Endothelial cell of umbilical vein (primary cell): ENCODE measurements at regions of chr11 and their contacts with region 1.

Region 1: DNA sequence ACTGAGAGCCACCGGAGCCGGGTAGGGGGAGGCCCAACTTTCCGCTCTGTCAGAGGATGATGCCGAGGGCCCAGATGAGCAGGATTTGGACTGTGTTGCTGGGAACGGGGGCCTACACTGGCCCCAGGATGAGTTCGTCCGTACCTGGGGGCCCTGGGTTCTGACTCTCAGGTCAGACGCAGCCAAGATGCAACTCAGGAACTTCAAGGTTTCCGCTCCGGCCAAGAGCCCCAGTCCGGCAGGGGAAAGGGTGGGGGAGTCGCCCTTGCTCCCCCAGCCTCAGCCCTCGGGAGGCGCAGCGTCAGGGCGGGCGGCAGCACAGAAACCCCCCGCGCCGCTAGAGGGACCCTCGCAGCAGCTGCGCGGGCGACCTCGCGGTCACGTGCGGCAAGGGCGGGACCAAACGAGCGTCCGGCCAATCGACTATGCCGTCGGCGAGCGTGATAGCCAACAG is 241 bp upstream of the ARL2 start:
- DNase-seq: peak; percentile 92
- H3K4me3 ChIP-seq: peak overlapping the region; percentile 32 to 84 (median 59)
- H3K27ac ChIP-seq: peak overlapping the region; percentile 87
- H3K4me1 ChIP-seq: peaks cover 4% of the 10 kb centered on the region
- H3K27me3 ChIP-seq: no peaks in the 10 kb centered on the region
- CTCF ChIP-seq: peak in 1 of 2 donors; percentile 56
- POLR2A ChIP-seq: no peak

Region 2: GRCh38 chr11:64729851-64730382 is 283.8 kb before region 1 on chr11:
- CTCF ChIA-PET with region 1: no interaction called
- POLR2A ChIA-PET with region 1: no interaction called
- dilution Hi-C with region 1: no loop called
- intact Hi-C with region 1: no loop called
- DNase-seq: no peak
- H3K4me3 ChIP-seq: no peak overlapping the region
- H3K27ac ChIP-seq: no peak overlapping the region
- H3K4me1 ChIP-seq: no peaks in the 10 kb centered on the region
- H3K27me3 ChIP-seq: peaks cover 3 to 9% of the 10 kb centered on the region in 2 experiments
- CTCF ChIP-seq: no peak
- POLR2A ChIP-seq: no peak

Region 3: GRCh38 chr11:64846998-64847666 is 166.6 kb before region 1 on chr11:
- CTCF ChIA-PET with region 1: interaction called, 14 read pairs
- POLR2A ChIA-PET with region 1: no interaction called
- dilution Hi-C with region 1: no loop called
- intact Hi-C with region 1: loop called (anchors 1 kb)
- DNase-seq: peak; percentile 85
- H3K4me3 ChIP-seq: no peak overlapping the region
- H3K27ac ChIP-seq: no peak overlapping the region
- H3K4me1 ChIP-seq: no peaks in the 10 kb centered on the region
- H3K27me3 ChIP-seq: no peaks in the 10 kb centered on the region
- CTCF ChIP-seq: peak; percentile 87 to 96
- POLR2A ChIP-seq: no peak

Region 4: DNA sequence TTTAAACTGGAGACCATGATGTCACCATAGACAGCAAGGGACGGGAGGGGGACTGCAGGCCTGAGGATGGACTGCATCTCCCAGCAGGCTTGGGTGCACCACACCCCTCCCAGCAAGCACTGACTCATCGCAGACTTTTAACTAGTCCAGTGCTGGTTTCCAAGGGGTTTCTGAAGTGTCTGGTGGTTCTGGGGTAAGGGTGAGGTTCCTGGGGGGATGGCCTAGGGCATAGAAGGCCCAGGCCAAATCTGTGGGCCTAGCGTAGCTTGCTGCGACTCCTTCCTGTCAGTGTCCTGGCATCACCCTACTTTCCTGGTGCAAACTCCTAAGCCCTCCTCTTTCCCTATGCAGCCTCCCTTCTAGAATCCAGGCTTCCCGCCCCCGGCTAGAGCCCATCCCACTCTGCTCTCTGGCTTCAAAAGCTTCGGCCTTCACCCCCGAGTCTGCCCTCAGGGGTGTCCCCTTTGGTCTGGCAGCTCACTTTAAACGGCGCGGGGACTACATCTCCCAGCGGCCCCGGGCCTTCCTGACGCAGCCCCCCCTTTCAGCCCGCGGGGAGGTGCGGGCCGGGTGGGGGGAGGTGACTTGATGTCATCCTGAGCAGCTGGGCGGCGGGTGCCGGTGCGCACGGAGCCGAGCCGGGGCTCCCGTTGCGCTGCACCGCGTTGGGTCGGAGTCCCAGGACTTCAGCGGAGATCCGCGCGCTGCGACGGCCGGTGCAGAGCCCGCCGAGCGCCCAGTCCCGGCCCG is 89.4 kb before region 1 on chr11 and contains the start of gene PPP2R5B:
- CTCF ChIA-PET with region 1: interaction called, 10 read pairs
- POLR2A ChIA-PET with region 1: no interaction called
- dilution Hi-C with region 1: no loop called
- intact Hi-C with region 1: no loop called
- DNase-seq: peak; percentile 91
- H3K4me3 ChIP-seq: peak within 1 kb of the TSS; percentile 40 to 88 (median 81)
- H3K27ac ChIP-seq: peak within 1 kb of the TSS; percentile 69
- H3K4me1 ChIP-seq: peaks cover 7% of the 10 kb centered on the region
- H3K27me3 ChIP-seq: no peaks in the 10 kb centered on the region
- CTCF ChIP-seq: no peak
- POLR2A ChIP-seq: peak; percentile 26
- total RNA-seq, gene PPP2R5B: 17.8 and 21.5 TPM in 2 replicates

Region 5: GRCh38 chr11:65027213-65028067 is 13.7 kb after region 1 on chr11 and contains the start of gene SNX15:
- CTCF ChIA-PET with region 1: interaction called, 10 read pairs
- POLR2A ChIA-PET with region 1: no interaction called
- dilution Hi-C with region 1: no loop called
- intact Hi-C with region 1: loop called (anchors 1 kb)
- DNase-seq: peak; percentile 95
- H3K4me3 ChIP-seq: peak within 1 kb of the TSS; percentile 68 to 83 (median 74)
- H3K27ac ChIP-seq: peak within 1 kb of the TSS; percentile 61
- H3K4me1 ChIP-seq: peaks cover 11% of the 10 kb centered on the region
- H3K27me3 ChIP-seq: no peaks in the 10 kb centered on the region
- CTCF ChIP-seq: peak; percentile 38 to 84
- POLR2A ChIP-seq: peak; percentile 81
- total RNA-seq, gene SNX15: 21.0 and 21.8 TPM in 2 replicates

Region 6: DNA sequence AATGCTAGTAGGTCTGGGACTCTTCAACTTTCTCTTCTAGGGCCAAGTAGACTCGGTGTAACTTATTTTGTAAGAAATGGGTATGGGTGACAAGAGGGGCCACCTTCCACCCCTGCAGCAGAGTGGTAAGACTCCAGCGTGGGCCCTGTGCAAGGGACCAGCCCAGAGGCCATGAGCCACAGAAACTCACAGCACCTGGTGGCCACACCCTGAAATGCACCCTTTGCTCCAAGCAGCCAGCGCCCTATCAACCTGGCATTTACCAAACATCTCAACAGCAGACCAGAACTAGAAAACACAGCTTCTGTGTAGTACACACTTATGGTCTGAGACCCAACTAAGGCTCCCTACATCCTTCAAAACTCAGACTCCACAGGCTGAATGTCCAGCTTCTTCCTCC is 64.4 kb after region 1 on chr11:
- CTCF ChIA-PET with region 1: interaction called, 11 read pairs
- POLR2A ChIA-PET with region 1: no interaction called
- dilution Hi-C with region 1: no loop called
- intact Hi-C with region 1: loop called (anchors 1 kb)
- DNase-seq: peak; percentile 22
- H3K4me3 ChIP-seq: no peak overlapping the region
- H3K27ac ChIP-seq: no peak overlapping the region
- H3K4me1 ChIP-seq: peaks cover 6% of the 10 kb centered on the region
- H3K27me3 ChIP-seq: no peaks in the 10 kb centered on the region
- CTCF ChIP-seq: peak; percentile 51 to 67
- POLR2A ChIP-seq: no peak

Region 7: DNA sequence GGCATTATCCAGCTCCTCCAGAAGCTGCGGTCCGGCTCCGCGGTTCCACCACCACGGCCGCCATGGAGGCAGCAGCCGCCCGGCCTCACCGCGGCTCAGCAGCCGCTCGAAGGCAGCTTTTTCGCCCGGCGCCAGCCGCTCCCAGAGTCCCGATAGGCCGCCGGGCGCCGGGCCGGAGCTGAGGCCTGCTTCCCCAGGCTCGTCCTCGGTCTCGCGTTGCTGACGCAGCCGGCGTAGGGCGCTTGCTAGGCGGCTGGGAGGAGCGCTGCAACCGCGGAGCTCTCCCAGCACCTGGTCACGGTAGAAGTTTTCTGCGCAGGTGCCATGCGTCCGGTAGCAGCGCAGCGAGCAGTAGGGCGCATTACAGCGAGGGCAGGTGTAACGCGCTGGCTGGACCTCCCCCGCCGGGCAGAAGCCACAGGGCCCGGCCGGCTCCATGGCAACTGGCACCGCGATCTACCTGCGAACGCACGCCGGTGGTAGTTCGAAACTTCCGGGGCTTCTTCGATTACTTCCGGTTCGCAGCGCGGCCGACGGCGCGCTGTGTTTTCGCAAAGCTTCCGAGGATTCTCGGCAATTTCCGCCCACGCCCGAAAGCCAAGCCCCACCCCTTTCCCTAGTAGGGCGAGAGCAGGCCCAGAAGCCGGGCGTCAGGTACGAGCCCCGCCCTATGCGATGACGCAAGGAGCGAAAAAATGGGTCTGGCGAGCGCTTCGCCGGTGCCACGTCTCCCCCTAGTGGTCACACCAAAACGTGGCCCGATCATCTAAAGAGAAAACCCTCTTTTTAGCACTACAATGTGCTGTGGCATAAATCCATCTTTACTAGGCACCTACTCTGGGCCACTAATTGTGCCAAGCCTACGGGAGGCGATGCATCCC is 103.7 kb after region 1 on chr11 and contains the start of gene ZNHIT2:
- CTCF ChIA-PET with region 1: interaction called, 17 read pairs
- POLR2A ChIA-PET with region 1: no interaction called
- dilution Hi-C with region 1: no loop called
- intact Hi-C with region 1: loop called (anchors 1 kb)
- DNase-seq: peak; percentile 99
- H3K4me3 ChIP-seq: peak within 1 kb of the TSS; percentile 24 to 75 (median 46)
- H3K27ac ChIP-seq: peak within 1 kb of the TSS; percentile 9
- H3K4me1 ChIP-seq: peaks cover 21% of the 10 kb centered on the region
- H3K27me3 ChIP-seq: no peaks in the 10 kb centered on the region
- CTCF ChIP-seq: peak; percentile 89 to 91
- POLR2A ChIP-seq: peak; percentile 85
- total RNA-seq, gene ZNHIT2: 9.0 and 9.2 TPM in 2 replicates